ENCODE measurements at regions of chr20 and their contacts with region 1.

Region 1: GRCh38 chr20:5448449-5449118 is 131.8 kb upstream of the PROKR2 start:
- DNase-seq: peak; percentile 64
- H3K4me3 Mint-ChIP-seq: no peak overlapping the region
- H3K27ac Mint-ChIP-seq: no peak overlapping the region
- H3K4me1 Mint-ChIP-seq: no peaks in the 10 kb centered on the region
- H3K27me3 Mint-ChIP-seq: peaks cover 62% of the 10 kb centered on the region
- CTCF ChIP-seq: peak; percentile 68

Region 2: GRCh38 chr20:4820806-4821518 is 627.6 kb before region 1 on chr20:
- CTCF ChIA-PET with region 1: no interaction called
- POLR2A ChIA-PET with region 1: no interaction called
- intact Hi-C with region 1: no loop called
- DNase-seq: peak; percentile 21
- H3K4me3 Mint-ChIP-seq: no peak overlapping the region
- H3K27ac Mint-ChIP-seq: no peak overlapping the region
- H3K4me1 Mint-ChIP-seq: no peaks in the 10 kb centered on the region
- H3K27me3 Mint-ChIP-seq: peaks cover 28% of the 10 kb centered on the region
- CTCF ChIP-seq: no peak

Region 3: DNA sequence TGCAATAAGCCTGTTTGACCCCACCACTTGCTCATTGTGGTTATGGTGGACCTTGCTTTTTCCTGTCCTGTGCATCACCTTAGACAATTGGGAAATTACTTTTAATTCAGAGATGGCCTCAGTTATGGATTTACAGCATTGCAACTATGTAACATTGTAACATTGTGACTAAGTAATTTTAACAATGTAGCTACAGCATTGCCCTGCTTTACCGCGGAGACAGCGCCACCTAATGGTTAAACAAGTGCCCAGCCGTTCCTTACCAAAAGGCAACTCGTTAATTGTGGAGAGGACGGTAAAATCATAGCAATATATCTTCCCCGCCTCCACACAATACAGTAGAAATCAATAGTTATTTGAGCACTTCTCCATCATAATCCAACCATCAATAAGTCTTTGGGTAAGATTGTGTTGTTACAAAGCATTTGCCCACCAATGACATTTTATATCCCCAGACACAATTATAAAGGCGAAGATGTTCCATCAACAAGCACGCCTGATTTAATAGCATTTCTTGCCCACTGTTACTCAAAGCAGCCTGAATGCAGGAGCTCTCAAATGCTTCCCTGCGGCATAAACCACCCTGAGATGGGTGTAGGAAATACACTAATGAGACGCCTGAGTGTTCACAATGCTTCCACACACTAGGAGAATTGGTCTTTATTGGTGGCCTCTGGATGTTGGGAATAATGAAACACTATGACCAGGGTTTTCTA is 225.5 kb before region 1 on chr20:
- CTCF ChIA-PET with region 1: interaction called, 16 read pairs
- POLR2A ChIA-PET with region 1: no interaction called
- intact Hi-C with region 1: no loop called
- DNase-seq: peak; percentile 66
- H3K4me3 Mint-ChIP-seq: no peak overlapping the region
- H3K27ac Mint-ChIP-seq: no peak overlapping the region
- H3K4me1 Mint-ChIP-seq: no peaks in the 10 kb centered on the region
- H3K27me3 Mint-ChIP-seq: peaks cover 51% of the 10 kb centered on the region
- CTCF ChIP-seq: peak; percentile 81

Region 4: GRCh38 chr20:5410470-5410869 is 38.1 kb before region 1 on chr20:
- CTCF ChIA-PET with region 1: interaction called, 10 read pairs
- POLR2A ChIA-PET with region 1: no interaction called
- intact Hi-C with region 1: no loop called
- DNase-seq: no peak
- H3K4me3 Mint-ChIP-seq: no peak overlapping the region
- H3K27ac Mint-ChIP-seq: no peak overlapping the region
- H3K4me1 Mint-ChIP-seq: no peaks in the 10 kb centered on the region
- H3K27me3 Mint-ChIP-seq: peaks cover 65% of the 10 kb centered on the region
- CTCF ChIP-seq: no peak

Region 5: GRCh38 chr20:5463007-5463686 is 14.6 kb after region 1 on chr20:
- CTCF ChIA-PET with region 1: interaction called, 31 read pairs
- POLR2A ChIA-PET with region 1: interaction called, 4 read pairs
- intact Hi-C with region 1: no loop called
- DNase-seq: no peak
- H3K4me3 Mint-ChIP-seq: no peak overlapping the region
- H3K27ac Mint-ChIP-seq: no peak overlapping the region
- H3K4me1 Mint-ChIP-seq: no peaks in the 10 kb centered on the region
- H3K27me3 Mint-ChIP-seq: peaks cover 77% of the 10 kb centered on the region
- CTCF ChIP-seq: no peak

Region 6: DNA sequence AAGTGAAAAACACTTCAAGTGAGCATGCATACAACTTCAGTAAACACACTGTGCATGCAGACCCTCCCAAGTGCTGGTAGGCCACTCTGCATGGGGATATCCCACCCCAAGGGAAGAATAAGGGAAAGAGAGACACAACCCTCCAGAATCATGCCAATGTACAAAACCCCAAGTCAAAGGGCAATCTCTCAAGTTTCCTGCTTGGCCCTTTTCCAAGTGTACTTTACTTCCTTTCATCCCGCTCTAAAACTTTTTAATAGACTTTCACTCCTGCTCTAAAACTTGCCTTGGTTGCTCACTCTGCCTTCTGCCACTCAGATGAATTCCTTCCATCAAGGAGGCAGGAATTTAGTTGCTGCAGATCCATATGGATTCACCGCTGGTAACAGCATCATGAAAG is 73.8 kb after region 1 on chr20:
- CTCF ChIA-PET with region 1: no interaction called
- POLR2A ChIA-PET with region 1: no interaction called
- intact Hi-C with region 1: no loop called
- DNase-seq: no peak
- H3K4me3 Mint-ChIP-seq: no peak overlapping the region
- H3K27ac Mint-ChIP-seq: no peak overlapping the region
- H3K4me1 Mint-ChIP-seq: no peaks in the 10 kb centered on the region
- H3K27me3 Mint-ChIP-seq: peaks cover 12% of the 10 kb centered on the region
- CTCF ChIP-seq: no peak

Measured in MCF 10A (cell line).